ENCODE measurements at regions of chr12 and their contacts with region 1.

Region 1: GRCh38 chr12:49740930-49741881 is at the start of gene TMBIM6:
- DNase-seq: peak; percentile 98
- ATAC-seq: peak; percentile 99
- H3K4me3 Mint-ChIP-seq: peak within 1 kb of the TSS; percentile 92
- H3K27ac Mint-ChIP-seq: peak within 1 kb of the TSS; percentile 98
- H3K4me1 Mint-ChIP-seq: peaks cover 21% of the 10 kb centered on the region
- H3K27me3 Mint-ChIP-seq: no peaks in the 10 kb centered on the region; the same call in 1 of the 2 replicates
- CTCF ChIP-seq: peak; percentile 79
- total RNA-seq, gene TMBIM6: 402 to 417 TPM (median 412 TPM) in 3 replicates

Region 2: DNA sequence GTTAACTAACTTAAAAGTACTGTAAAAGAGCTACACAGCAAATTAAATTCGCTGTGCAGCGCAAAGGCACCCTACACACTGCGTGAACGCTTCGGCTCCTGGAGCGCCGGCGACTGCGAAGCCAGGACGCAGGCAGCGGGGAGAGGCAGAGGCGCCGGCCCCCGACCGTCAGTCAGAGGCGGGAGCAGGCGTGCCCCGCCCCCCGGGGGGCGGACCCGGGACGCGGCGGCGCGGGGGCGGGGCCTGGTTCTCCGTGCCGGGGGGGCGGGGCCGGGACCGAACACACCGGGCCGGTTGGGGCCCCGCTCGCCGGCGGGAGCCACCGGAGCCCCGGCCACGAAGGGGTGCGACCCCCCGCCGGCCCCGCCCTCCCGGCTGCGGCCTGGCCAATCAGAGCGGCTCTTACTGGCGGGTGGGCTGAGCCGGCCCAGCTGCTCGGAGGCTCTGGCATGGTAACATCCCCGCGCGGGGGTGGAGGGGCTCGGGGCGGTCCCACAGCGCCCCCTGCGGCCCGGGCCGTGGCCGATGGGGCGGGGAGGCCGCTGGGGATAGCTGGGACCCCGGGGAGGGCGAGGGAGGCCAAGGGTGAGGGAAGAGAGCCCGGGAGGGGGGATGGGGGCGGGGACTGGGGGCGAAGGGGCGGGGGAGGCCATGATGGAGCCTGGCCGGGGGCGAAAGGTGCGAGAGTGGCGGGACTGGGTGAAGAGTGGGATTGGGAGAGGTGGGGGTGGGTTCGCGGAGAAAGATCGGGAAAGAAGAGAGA is 117.9 kb before region 1 on chr12 and contains the start of gene PRPF40B:
- CTCF ChIA-PET with region 1: interaction called, 30 read pairs
- POLR2A ChIA-PET with region 1: interaction called, 9 read pairs
- DNase-seq: peak; percentile 92
- ATAC-seq: peak; percentile 84
- H3K4me3 Mint-ChIP-seq: peak within 1 kb of the TSS; percentile 90
- H3K27ac Mint-ChIP-seq: peak within 1 kb of the TSS; percentile 92
- H3K4me1 Mint-ChIP-seq: peaks cover 35% of the 10 kb centered on the region
- H3K27me3 Mint-ChIP-seq: no peaks in the 10 kb centered on the region
- CTCF ChIP-seq: peak; percentile 47; the same call in 1 of the 2 replicates
- total RNA-seq, gene PRPF40B: 38.0 to 46.0 TPM (median 40.5 TPM) in 3 replicates

Region 3: DNA sequence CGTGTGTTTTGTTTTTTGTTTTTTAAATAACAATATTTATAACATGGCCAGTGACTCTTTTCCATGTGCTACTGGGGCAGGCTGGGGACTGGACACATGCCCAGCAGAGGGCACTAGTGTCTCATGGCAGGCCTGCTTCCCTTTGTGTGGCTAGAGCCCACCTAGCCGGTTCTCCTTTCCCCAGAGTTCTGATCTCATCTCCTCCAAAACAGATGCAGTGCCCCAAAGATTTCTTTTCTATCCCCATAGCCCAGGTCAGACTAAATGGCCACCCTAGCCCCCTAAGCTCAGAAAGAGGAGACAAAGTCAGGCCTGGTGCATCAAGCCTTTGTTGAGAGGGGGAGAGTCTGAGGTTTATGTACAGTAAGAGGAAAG is 96.6 kb before region 1 on chr12:
- CTCF ChIA-PET with region 1: interaction called, 16 read pairs
- POLR2A ChIA-PET with region 1: interaction called, 3 read pairs
- DNase-seq: peak; percentile 80
- ATAC-seq: peak; percentile 75
- H3K4me3 Mint-ChIP-seq: no peak overlapping the region
- H3K27ac Mint-ChIP-seq: peak overlapping the region; percentile 14; the same call in 1 of the 2 replicates
- H3K4me1 Mint-ChIP-seq: peaks cover 16% of the 10 kb centered on the region
- H3K27me3 Mint-ChIP-seq: no peaks in the 10 kb centered on the region
- CTCF ChIP-seq: peak; percentile 85

Region 4: GRCh38 chr12:49673446-49674317 is 67.5 kb before region 1 on chr12:
- CTCF ChIA-PET with region 1: interaction called, 22 read pairs
- POLR2A ChIA-PET with region 1: interaction called, 4 read pairs
- DNase-seq: peak; percentile 66
- ATAC-seq: peak; percentile 93
- H3K4me3 Mint-ChIP-seq: no peak overlapping the region
- H3K27ac Mint-ChIP-seq: peak overlapping the region; percentile 97
- H3K4me1 Mint-ChIP-seq: peaks cover 30% of the 10 kb centered on the region
- H3K27me3 Mint-ChIP-seq: no peaks in the 10 kb centered on the region
- CTCF ChIP-seq: no peak

Region 5: GRCh38 chr12:49698619-49699545 is 42.3 kb before region 1 on chr12:
- CTCF ChIA-PET with region 1: interaction called, 38 read pairs
- POLR2A ChIA-PET with region 1: interaction called, 6 read pairs
- DNase-seq: peak; percentile 27
- ATAC-seq: peak; percentile 93
- H3K4me3 Mint-ChIP-seq: peak overlapping the region; percentile 69
- H3K27ac Mint-ChIP-seq: peak overlapping the region; percentile 99
- H3K4me1 Mint-ChIP-seq: peaks cover 71% of the 10 kb centered on the region
- H3K27me3 Mint-ChIP-seq: no peaks in the 10 kb centered on the region
- CTCF ChIP-seq: no peak

Region 6: GRCh38 chr12:49720214-49720613 is 21.0 kb before region 1 on chr12:
- CTCF ChIA-PET with region 1: interaction called, 19 read pairs
- POLR2A ChIA-PET with region 1: no interaction called
- DNase-seq: no peak
- ATAC-seq: no peak
- H3K4me3 Mint-ChIP-seq: no peak overlapping the region
- H3K27ac Mint-ChIP-seq: no peak overlapping the region
- H3K4me1 Mint-ChIP-seq: no peaks in the 10 kb centered on the region
- H3K27me3 Mint-ChIP-seq: peaks cover 4% of the 10 kb centered on the region
- CTCF ChIP-seq: no peak

Region 7: DNA sequence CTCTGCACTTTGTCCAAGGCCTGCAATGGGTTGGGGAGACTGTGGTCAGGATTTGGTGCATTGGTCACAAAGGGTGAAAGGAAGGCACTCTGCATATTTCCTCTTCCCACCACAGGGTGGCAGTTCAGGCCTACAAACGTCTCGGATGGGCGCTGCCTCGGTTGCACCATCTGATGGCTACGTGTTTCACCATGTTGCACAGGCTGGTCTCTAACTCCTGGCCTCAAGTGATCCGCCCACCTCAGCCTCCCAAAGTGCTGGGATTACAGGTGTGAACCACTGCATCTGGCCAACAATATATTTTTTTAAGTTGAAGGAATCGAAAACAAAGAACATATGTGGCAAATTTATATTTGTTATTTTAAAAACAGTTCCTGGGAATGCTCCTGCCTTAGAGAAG is 35.2 kb after region 1 on chr12:
- CTCF ChIA-PET with region 1: interaction called, 12 read pairs
- POLR2A ChIA-PET with region 1: no interaction called
- DNase-seq: peak; percentile 72
- ATAC-seq: peak; percentile 89
- H3K4me3 Mint-ChIP-seq: no peak overlapping the region
- H3K27ac Mint-ChIP-seq: no peak overlapping the region
- H3K4me1 Mint-ChIP-seq: peaks cover 17% of the 10 kb centered on the region
- H3K27me3 Mint-ChIP-seq: peaks cover 20% of the 10 kb centered on the region
- CTCF ChIP-seq: peak; percentile 50

Measured in WTC11 (cell line).